Right ventricle myocardium inferior (tissue), 1 donor: ENCODE measurements at regions of chr12 and their contacts with region 1.

Region 1: DNA sequence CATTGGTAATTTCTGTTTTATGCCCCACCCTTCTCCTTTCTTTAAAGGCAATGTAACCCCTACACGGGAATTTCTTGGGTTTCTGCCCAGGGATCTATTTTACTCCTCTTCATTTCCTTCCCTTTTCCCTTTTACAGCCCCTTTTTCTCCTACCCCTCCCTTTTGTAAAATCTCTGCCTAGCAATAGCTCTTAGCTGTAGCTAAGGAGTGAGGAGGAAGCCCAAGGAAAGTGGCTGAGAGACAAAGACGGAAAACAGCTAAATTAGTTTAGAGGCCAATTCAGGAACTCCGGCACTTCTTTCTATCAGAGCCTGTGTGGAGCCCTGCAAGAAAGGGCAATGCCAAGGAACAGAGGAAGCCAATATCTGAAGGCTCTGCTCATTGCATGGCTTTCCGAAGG is 40.3 kb downstream of the SOCS2 start:
- DNase-seq: no peak
- ATAC-seq: peak; percentile 24

Region 2: GRCh38 chr12:93297032-93297431 is 315.7 kb before region 1 on chr12:
- intact Hi-C with region 1: no loop called
- DNase-seq: no peak
- ATAC-seq: no peak

Region 3: DNA sequence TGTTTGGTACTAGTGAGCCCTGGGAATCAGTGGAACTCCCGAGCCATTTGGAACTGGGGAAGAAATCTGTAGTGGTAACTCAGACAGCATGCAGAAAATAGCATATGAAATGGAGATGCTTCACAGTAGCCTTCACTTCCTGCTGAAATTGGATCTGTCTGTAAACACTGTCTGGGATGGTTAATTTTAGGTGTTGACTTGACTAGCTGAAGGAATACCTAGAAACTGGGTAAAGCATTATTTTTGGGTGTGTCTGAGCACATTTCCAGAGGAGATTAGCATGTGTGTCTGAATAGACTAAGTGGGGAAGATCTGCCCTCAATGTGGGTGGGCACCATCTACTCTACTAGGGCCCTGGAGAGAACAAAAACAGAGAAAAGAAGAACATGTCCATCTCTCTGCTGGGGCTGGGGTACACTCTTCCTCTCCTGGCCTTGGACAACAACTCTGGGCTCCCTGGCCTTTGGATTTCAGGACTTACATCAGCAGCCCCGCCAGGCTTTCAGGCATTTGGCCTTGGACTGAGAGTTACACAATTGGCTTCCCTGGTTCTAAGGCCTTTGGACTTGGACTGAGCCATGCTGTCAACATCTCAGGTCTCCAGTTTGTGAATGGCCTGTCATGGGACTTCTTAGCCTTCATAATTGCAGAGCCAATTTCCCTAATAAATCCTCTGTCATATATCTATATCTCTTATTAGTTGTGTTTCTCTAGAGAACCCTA is 50.4 kb after region 1 on chr12:
- intact Hi-C with region 1: loop called (anchors 5 kb)
- DNase-seq: no peak
- ATAC-seq: peak; percentile 63

Region 4: GRCh38 chr12:93707836-93708235 is 95.1 kb after region 1 on chr12:
- intact Hi-C with region 1: no loop called
- DNase-seq: no peak
- ATAC-seq: no peak

Region 5: GRCh38 chr12:93802698-93803423 is 190.1 kb after region 1 on chr12:
- intact Hi-C with region 1: no loop called
- DNase-seq: no peak
- ATAC-seq: peak; percentile 47